HepG2 (cell line): ENCODE measurements at regions of chr21 and their contacts with region 1.

Region 1: DNA sequence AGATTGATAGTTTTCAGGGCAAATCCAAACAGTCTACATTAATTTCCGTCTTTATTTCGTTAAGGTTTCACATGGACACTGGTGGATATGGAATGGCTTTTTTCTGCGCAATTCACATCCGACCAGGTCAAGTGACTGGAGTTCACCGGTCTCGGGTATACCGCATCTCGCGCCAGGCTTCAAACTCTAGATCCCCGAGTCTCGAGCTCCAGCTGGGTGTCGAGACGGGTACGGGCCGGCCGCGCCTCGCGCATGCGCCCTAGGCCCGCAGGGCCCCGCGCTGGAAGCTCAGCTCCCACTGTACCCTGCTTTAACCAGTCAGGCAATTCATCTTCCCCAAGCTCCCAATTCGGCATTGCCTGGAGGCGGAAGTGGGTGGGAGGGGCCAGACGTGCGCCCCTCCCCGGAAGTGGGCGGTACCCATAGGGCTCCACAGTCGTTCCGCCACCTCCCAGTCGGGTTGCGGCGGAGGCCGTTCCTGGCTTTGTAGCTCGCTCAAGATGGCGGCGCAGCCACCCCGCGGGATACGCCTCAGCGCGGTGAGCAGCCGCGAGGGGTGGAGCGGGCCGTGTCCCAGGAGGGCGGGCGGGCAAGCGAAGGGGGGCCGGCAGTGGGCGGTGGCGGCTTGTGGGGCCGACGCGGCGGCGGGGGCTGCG is at the start of gene MORC3:
- DNase-seq: peak; percentile 97
- ATAC-seq: peak; percentile 92
- H3K4me3 ChIP-seq: peak within 1 kb of the TSS; percentile 82 to 99 (median 94)
- H3K27ac ChIP-seq: peak within 1 kb of the TSS; percentile 87
- H3K4me1 ChIP-seq: peaks cover 46% of the 10 kb centered on the region
- H3K27me3 ChIP-seq: peaks cover 0 to 5% of the 10 kb centered on the region in 2 experiments; a peak in 1 of 5 replicates
- CTCF ChIP-seq: no peak
- EP300 ChIP-seq: peak in 1 of 2 experiments; percentile 46; a peak in 1 of 4 replicates
- POLR2A ChIP-seq: peak; percentile 86 to 93
- RAD21 ChIP-seq: no peak
- total RNA-seq, gene MORC3: 19.5 and 25.5 TPM in 2 replicates

Region 2: DNA sequence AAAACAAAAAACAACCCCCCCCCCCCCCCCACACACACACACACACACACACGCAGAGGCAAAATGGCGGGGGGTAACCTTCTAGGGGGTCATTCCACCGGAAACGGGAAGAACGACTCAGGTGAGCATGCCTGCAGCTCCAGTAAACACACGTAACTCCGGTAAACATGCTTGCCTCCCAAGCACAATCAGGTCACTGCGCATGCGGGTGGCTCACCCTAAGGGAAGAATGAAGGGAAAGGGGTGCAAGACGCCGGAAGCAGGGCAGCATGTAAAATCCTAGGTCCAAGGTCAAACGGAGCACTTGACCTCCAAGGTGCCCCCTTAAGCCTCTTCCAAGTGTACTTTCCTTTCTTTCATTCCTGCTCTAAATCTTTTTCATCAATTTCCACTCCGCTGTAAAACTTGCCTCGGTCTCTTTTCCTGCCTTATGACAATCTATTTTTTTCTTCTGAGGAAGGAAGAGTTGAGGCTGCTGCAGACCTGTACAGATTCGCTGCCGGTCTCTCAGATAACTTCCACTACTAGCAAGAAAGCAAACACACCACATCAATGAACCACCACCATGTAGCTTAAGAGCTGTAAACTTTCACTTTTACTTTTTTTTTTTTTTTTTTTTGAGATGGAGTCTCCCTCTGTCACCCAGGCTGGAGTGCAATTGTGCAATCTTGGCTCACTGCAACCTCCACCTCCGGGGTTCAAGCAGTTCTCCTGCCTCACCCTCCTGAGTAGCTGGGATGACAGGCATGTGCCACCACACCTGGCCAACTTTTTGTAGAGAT is 206.1 kb before region 1 on chr21:
- CTCF ChIA-PET with region 1: no interaction called
- POLR2A ChIA-PET with region 1: interaction called, 14 read pairs
- in situ Hi-C with region 1: no loop called
- intact Hi-C with region 1: no loop called
- DNase-seq: peak; percentile 70
- ATAC-seq: peak; percentile 76
- H3K4me3 ChIP-seq: peak overlapping the region; percentile 62 to 75 (median 66); a peak in 5 of 6 replicates
- H3K27ac ChIP-seq: peak overlapping the region; percentile 68
- H3K4me1 ChIP-seq: peaks cover 14% of the 10 kb centered on the region
- H3K27me3 ChIP-seq: peaks cover 0 to 7% of the 10 kb centered on the region in 2 experiments; a peak in 2 of 5 replicates
- CTCF ChIP-seq: 0 out of 2 replicates have a peak, but pooled peaks have one; percentile 3
- EP300 ChIP-seq: no peak; a peak in 1 of 4 replicates
- POLR2A ChIP-seq: peak in 1 of 2 experiments; percentile 60; a peak in 1 of 4 replicates
- RAD21 ChIP-seq: no peak

Region 3: GRCh38 chr21:36156339-36156814 is 163.5 kb before region 1 on chr21:
- CTCF ChIA-PET with region 1: no interaction called
- POLR2A ChIA-PET with region 1: interaction called, 15 read pairs
- in situ Hi-C with region 1: no loop called
- intact Hi-C with region 1: no loop called
- DNase-seq: peak; percentile 91
- ATAC-seq: peak; percentile 90
- H3K4me3 ChIP-seq: peak overlapping the region; percentile 85 to 91 (median 87); a peak in 5 of 6 replicates
- H3K27ac ChIP-seq: peak overlapping the region; percentile 81
- H3K4me1 ChIP-seq: peaks cover 17% of the 10 kb centered on the region
- H3K27me3 ChIP-seq: peaks cover 0 to 5% of the 10 kb centered on the region in 2 experiments; a peak in 1 of 5 replicates
- CTCF ChIP-seq: no peak
- EP300 ChIP-seq: no peak
- POLR2A ChIP-seq: peak in 1 of 2 experiments; percentile 8; a peak in 1 of 4 replicates
- RAD21 ChIP-seq: no peak

Region 4: GRCh38 chr21:36203617-36203917 is 116.3 kb before region 1 on chr21:
- CTCF ChIA-PET with region 1: no interaction called
- POLR2A ChIA-PET with region 1: interaction called, 11 read pairs
- in situ Hi-C with region 1: no loop called
- intact Hi-C with region 1: no loop called
- DNase-seq: peak; percentile 34
- ATAC-seq: peak; percentile 31; the same call in 2 of the 3 replicates
- H3K4me3 ChIP-seq: no peak overlapping the region
- H3K27ac ChIP-seq: no peak overlapping the region
- H3K4me1 ChIP-seq: peaks cover 29% of the 10 kb centered on the region
- H3K27me3 ChIP-seq: no peaks in the 10 kb centered on the region
- CTCF ChIP-seq: no peak
- EP300 ChIP-seq: no peak
- POLR2A ChIP-seq: no peak
- RAD21 ChIP-seq: no peak

Region 5: DNA sequence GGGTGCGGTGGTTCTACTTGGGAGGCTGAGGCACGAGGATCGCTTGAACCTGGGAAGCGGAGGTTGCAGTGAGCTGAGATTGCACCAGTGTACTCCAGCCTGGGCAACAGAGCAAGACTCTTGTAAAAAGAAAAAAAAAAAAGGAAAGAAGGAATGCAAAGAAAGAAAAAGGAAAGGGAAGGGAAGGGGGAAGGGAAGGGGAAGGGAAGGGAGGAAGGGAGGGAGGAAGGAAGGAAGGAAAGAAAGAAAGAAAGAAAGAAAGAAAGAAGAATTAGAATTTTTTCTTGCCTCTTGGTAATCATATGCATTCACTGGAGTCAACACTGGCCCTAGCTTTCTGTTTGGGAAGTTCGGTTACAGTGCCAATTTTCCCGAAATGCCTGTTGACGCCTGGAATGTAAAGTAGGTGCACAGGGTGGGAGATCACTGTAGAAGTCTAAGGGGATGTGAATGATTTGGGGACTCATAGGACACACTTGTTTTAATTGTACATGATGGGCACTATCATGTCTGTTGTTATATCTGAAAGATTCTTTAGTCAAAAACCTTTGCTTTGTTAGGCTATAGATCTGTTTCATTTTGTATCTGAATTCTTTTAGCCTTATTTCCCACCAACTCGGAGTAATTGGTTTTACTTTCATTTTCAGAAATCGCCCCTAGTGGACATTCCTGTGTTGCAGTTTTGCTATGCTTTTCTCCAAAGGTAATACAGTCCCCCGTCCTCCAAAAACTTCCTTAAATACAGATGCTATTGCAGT is 59.7 kb before region 1 on chr21:
- CTCF ChIA-PET with region 1: no interaction called
- POLR2A ChIA-PET with region 1: interaction called, 4 read pairs
- in situ Hi-C with region 1: no loop called
- intact Hi-C with region 1: loop called (anchors 10 kb)
- DNase-seq: peak; percentile 55
- ATAC-seq: peak; percentile 91
- H3K4me3 ChIP-seq: peak overlapping the region; percentile 63 to 72 (median 66)
- H3K27ac ChIP-seq: peak overlapping the region; percentile 57
- H3K4me1 ChIP-seq: peaks cover 19% of the 10 kb centered on the region
- H3K27me3 ChIP-seq: no peaks in the 10 kb centered on the region; a peak in 1 of 5 replicates
- CTCF ChIP-seq: peak; percentile 56
- EP300 ChIP-seq: no peak
- POLR2A ChIP-seq: no peak
- RAD21 ChIP-seq: no peak

Region 6: DNA sequence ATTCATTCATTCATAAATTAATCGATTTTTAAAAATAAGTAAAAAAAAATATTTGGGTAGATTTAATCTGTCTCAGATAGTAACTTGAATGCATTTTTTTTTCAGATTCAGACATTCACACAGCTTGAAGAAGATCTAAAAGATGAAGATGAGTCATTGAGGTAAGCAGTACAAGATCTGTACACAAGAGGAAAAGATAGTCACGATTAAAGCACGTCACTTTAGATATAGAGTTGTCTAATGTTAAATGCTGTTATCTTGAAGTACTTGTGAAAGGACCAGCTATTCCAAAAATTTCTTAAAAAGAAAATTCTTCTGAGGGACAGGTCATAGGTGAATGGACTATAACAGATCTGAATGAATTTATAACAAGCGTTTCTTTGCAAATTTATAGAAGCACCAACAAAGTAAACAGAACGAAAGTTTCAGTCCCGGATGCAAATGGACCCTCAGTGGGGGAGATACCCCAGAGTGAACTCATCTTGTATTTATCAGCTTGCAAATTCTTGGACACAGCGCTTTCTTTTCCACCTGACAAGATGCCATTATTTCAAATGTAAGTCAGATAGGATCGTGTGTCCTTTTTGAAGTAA is 31.1 kb before region 1 on chr21:
- CTCF ChIA-PET with region 1: no interaction called
- POLR2A ChIA-PET with region 1: no interaction called
- in situ Hi-C with region 1: no loop called
- intact Hi-C with region 1: no loop called
- DNase-seq: no peak
- ATAC-seq: no peak
- H3K4me3 ChIP-seq: no peak overlapping the region
- H3K27ac ChIP-seq: no peak overlapping the region
- H3K4me1 ChIP-seq: no peaks in the 10 kb centered on the region
- H3K27me3 ChIP-seq: no peaks in the 10 kb centered on the region
- CTCF ChIP-seq: no peak
- EP300 ChIP-seq: no peak
- POLR2A ChIP-seq: no peak
- RAD21 ChIP-seq: no peak

Region 7: GRCh38 chr21:36330904-36331303 is 11.0 kb after region 1 on chr21:
- CTCF ChIA-PET with region 1: no interaction called
- POLR2A ChIA-PET with region 1: interaction called, 19 read pairs
- in situ Hi-C with region 1: no loop called
- intact Hi-C with region 1: no loop called
- DNase-seq: peak; percentile 51
- ATAC-seq: peak; percentile 94
- H3K4me3 ChIP-seq: no peak overlapping the region
- H3K27ac ChIP-seq: no peak overlapping the region
- H3K4me1 ChIP-seq: peaks cover 24% of the 10 kb centered on the region
- H3K27me3 ChIP-seq: no peaks in the 10 kb centered on the region
- CTCF ChIP-seq: peak; percentile 70
- EP300 ChIP-seq: no peak
- POLR2A ChIP-seq: no peak
- RAD21 ChIP-seq: peak; percentile 47

Region 8: DNA sequence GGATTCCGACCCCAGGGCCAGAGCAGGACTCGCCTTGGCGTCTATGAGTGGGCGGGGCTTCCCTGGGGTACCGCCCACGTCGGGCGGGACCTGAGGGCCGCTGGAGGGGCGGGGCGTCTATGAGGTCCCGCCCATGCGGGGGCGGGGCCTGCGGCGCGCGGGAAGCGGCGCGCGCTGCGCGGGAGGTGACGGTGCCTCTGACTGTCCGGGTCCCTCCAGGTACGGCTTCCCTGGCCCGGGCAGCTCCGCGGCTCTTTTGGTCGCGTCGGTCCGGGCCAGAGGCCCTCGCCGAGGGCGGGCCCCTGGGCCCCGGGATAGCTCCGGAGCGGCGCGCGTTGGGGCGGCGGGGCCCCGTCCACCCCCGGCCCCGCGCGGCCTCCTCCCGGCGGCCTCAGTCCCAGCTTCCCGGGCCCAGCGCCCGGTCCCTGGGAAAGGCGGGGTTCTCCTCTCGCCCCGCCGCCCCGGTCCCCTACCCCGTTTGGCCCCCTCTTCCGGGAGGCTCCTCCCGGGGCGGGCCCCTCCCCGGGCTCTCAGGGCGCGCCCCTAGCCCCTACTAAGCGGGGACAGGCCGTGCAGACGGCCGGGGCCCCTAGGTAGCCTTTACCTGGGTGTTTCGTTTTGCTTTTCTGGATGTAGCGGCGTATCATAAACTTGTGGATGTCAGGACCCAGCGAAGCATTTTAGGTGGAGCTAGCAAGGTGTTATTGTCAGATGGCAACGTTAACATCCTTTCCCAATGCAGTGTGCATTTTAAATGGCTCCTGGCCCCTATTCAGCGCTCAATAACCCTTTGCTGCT is 65.5 kb after region 1 on chr21 and contains the start of gene CHAF1B:
- CTCF ChIA-PET with region 1: no interaction called
- POLR2A ChIA-PET with region 1: interaction called, 5 read pairs
- in situ Hi-C with region 1: no loop called
- intact Hi-C with region 1: loop called (anchors 1 kb)
- DNase-seq: peak; percentile 64
- ATAC-seq: peak; percentile 88
- H3K4me3 ChIP-seq: peak within 1 kb of the TSS; percentile 67 to 82 (median 75)
- H3K27ac ChIP-seq: peak within 1 kb of the TSS; percentile 42
- H3K4me1 ChIP-seq: peaks cover 47% of the 10 kb centered on the region
- H3K27me3 ChIP-seq: no peaks in the 10 kb centered on the region
- CTCF ChIP-seq: no peak
- EP300 ChIP-seq: no peak
- POLR2A ChIP-seq: peak; percentile 68 to 78
- RAD21 ChIP-seq: 0 out of 2 replicates have a peak, but pooled peaks have one; percentile 14
- total RNA-seq, gene CHAF1B: 14.1 and 18.5 TPM in 2 replicates